Activated T-helper 1 cell treated with anti-CD3 and anti-CD28 coated beads, Interleukin-12 subunit alpha, Interleukin-12 subunit beta, Interleukin-2, Interleukin-4 antibody, amounts not matched to agents 30 ng/mL and 10 ng/mL and 1 ng/mL, durations not matched to agents 14 hours and 24 hours and 36 hours (primary cell): ENCODE measurements at regions of chr4 and their contacts with region 1.

Region 1: DNA sequence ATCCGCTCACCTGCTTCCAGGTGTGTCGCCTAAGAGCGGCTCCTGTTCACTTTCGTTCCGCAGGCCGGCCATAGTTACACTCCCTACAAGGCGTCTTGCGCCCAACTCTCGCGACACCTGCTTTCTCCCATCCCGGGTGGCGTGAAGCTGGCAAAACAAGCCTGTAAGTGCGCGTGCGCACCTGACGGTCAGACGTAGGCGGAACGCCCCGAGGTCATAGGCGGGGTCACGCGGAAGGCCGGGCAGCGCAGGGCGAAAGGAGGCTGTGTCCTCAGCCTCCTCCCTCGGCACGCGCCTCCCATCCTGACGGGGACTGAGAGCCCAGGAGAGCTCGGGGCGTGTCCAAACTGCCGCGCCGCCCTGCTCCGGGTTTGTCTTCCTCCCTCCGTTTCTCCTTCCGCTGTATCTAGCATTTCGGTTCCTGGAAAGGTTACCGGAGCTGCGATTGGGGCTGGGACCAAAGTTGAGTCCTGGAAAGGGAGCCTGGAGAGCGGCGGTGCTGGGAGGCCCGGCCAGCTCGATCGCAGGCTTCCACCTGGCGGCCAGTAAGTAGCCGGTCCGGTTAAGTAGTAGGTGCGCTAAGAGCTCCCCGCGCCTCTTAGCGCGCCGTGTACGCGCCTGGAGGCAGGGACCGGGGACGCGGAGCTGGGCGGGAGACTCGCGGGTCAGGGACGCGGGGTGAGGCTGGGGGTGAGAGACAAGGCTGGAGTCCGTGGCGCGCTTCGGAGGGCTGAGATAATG is at the starts of genes ABHD18 and MFSD8:
- DNase-seq: peak; percentile 100
- H3K4me3 Mint-ChIP-seq: peak within 1 kb of the TSS; percentile 90
- H3K27ac Mint-ChIP-seq: peak within 1 kb of the TSS; percentile 96
- H3K4me1 Mint-ChIP-seq: peaks cover 42% of the 10 kb centered on the region
- H3K27me3 Mint-ChIP-seq: no peaks in the 10 kb centered on the region
- total RNA-seq, gene ABHD18: 18.3 and 18.5 TPM in 2 replicates
- total RNA-seq, gene MFSD8: 18.7 and 21.1 TPM in 2 replicates

Region 2: GRCh38 chr4:127782274-127783025 is 182.8 kb before region 1 on chr4 and contains the start of gene HSPA4L:
- intact Hi-C with region 1: loop called (anchors 1 kb)
- DNase-seq: peak; percentile 64
- H3K4me3 Mint-ChIP-seq: peak within 1 kb of the TSS; percentile 91
- H3K27ac Mint-ChIP-seq: peak within 1 kb of the TSS; percentile 97
- H3K4me1 Mint-ChIP-seq: peaks cover 32% of the 10 kb centered on the region
- H3K27me3 Mint-ChIP-seq: peaks cover 65% of the 10 kb centered on the region
- total RNA-seq, gene HSPA4L: 2.5 and 3.8 TPM in 2 replicates

Region 3: DNA sequence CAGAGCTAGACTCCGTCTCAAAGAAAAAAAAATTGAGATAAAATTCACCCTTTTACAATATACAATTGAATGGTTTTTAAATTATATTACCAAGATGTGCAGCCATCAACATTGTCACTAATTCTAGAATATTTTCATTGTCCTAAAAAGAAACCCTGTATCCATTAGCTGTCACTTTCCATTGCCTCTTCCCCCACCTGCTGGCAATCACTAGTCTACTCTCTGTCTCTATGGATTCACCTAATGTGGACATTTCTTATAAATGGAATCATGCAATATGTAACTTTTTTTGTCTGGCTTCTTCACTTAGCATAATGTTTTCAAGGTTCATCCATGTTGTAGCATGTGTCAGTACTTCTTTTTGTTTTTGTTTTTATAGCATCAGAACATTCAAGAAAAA is 20.8 kb after region 1 on chr4:
- intact Hi-C with region 1: loop called (anchors 2 kb)
- DNase-seq: no peak
- H3K4me3 Mint-ChIP-seq: no peak overlapping the region
- H3K27ac Mint-ChIP-seq: no peak overlapping the region
- H3K4me1 Mint-ChIP-seq: no peaks in the 10 kb centered on the region
- H3K27me3 Mint-ChIP-seq: no peaks in the 10 kb centered on the region

Region 4: GRCh38 chr4:128060699-128061565 is 95.7 kb after region 1 on chr4 and contains the start of gene LARP1B:
- intact Hi-C with region 1: loop called (anchors 1 kb)
- DNase-seq: peak; percentile 93
- H3K4me3 Mint-ChIP-seq: peak within 1 kb of the TSS; percentile 88
- H3K27ac Mint-ChIP-seq: peak within 1 kb of the TSS; percentile 95
- H3K4me1 Mint-ChIP-seq: peaks cover 6% of the 10 kb centered on the region
- H3K27me3 Mint-ChIP-seq: no peaks in the 10 kb centered on the region
- total RNA-seq, gene LARP1B: 33.3 and 34.5 TPM in 2 replicates

Region 5: GRCh38 chr4:129093191-129093920 is 1128.1 kb after region 1 on chr4 and contains the start of gene SCLT1:
- intact Hi-C with region 1: loop called (anchors 1 kb)
- DNase-seq: peak; percentile 96
- H3K4me3 Mint-ChIP-seq: peak within 1 kb of the TSS; percentile 66
- H3K27ac Mint-ChIP-seq: peak within 1 kb of the TSS; percentile 42
- H3K4me1 Mint-ChIP-seq: peaks cover 56% of the 10 kb centered on the region
- H3K27me3 Mint-ChIP-seq: no peaks in the 10 kb centered on the region
- total RNA-seq, gene SCLT1: 24.3 and 24.4 TPM in 2 replicates